ENCODE measurements at regions of chr20 and their contacts with region 1.

Region 1: GRCh38 chr20:37901654-37902503 is 1.0 kb upstream of the VSTM2L start:
- DNase-seq: peak; percentile 49
- ATAC-seq: peak; percentile 57
- H3K4me3 Mint-ChIP-seq: peak overlapping the region; percentile 82
- H3K27ac Mint-ChIP-seq: no peak overlapping the region
- H3K4me1 Mint-ChIP-seq: peaks cover 28% of the 10 kb centered on the region
- H3K27me3 Mint-ChIP-seq: peaks cover 26% of the 10 kb centered on the region
- CTCF ChIP-seq: peak; percentile 29; the same call in 1 of the 2 replicates

Region 2: DNA sequence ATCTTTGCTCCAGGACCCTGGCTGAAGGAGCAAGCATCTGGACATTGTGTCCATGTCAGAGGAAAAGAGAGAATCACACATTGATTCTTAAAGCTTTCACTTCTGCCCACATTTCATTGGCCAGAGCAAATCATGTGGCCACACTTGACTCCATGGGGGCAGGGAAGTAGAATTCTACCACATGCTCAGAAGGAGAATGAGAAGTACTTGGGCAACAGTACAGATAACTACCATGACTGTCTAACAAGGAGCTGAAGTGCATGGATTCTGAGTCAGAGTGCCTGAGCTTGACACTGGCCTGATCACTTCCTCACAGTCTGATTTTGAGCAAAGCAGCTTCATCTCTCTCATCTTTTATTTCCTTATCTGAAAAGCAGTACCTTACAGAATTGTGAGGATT is 678.8 kb before region 1 on chr20:
- CTCF ChIA-PET with region 1: no interaction called
- POLR2A ChIA-PET with region 1: no interaction called
- DNase-seq: no peak
- ATAC-seq: no peak
- H3K4me3 Mint-ChIP-seq: no peak overlapping the region
- H3K27ac Mint-ChIP-seq: peak overlapping the region; percentile 84
- H3K4me1 Mint-ChIP-seq: peaks cover 35% of the 10 kb centered on the region
- H3K27me3 Mint-ChIP-seq: no peaks in the 10 kb centered on the region
- CTCF ChIP-seq: no peak

Region 3: GRCh38 chr20:37880726-37881591 is 20.9 kb before region 1 on chr20:
- CTCF ChIA-PET with region 1: no interaction called
- POLR2A ChIA-PET with region 1: no interaction called
- DNase-seq: no peak
- ATAC-seq: no peak
- H3K4me3 Mint-ChIP-seq: no peak overlapping the region
- H3K27ac Mint-ChIP-seq: no peak overlapping the region
- H3K4me1 Mint-ChIP-seq: peaks cover 7% of the 10 kb centered on the region
- H3K27me3 Mint-ChIP-seq: no peaks in the 10 kb centered on the region
- CTCF ChIP-seq: no peak

Region 4: DNA sequence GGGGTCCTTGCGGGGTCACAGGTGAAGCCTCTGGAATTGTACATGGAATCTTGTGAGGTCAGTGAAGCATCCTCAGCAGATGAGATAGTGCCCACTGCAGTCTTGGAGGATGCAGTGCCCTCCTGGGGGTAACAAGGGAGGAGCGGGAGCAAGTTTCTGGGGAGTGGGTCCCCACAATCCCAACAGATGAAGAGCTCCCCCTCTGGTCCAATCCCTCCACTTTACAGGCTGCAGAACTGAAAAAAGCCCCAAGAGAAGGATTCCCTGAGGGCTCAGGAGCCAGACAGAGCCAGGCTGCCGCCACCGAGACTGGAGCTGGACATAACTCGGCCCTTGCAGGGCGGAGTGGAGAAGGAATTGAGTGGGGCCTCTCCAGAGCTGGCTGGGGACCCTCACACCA is 79.0 kb after region 1 on chr20:
- CTCF ChIA-PET with region 1: interaction called, 10 read pairs
- POLR2A ChIA-PET with region 1: no interaction called
- DNase-seq: no peak
- ATAC-seq: peak; percentile 62
- H3K4me3 Mint-ChIP-seq: no peak overlapping the region
- H3K27ac Mint-ChIP-seq: no peak overlapping the region
- H3K4me1 Mint-ChIP-seq: peaks cover 19% of the 10 kb centered on the region
- H3K27me3 Mint-ChIP-seq: no peaks in the 10 kb centered on the region; the same call in 1 of the 2 replicates
- CTCF ChIP-seq: no peak

Measured in WTC11 (cell line).